Motor neuron (in vitro differentiated cells): ENCODE measurements at regions of chr3 and their contacts with region 1.

Region 1: GRCh38 chr3:168156479-168156878 is 60.8 kb upstream of the GOLIM4 start:
- ATAC-seq: no peak
- H3K4me3 ChIP-seq: no peak overlapping the region
- H3K27ac ChIP-seq: no peak overlapping the region
- H3K4me1 ChIP-seq: no peaks in the 10 kb centered on the region

Region 2: DNA sequence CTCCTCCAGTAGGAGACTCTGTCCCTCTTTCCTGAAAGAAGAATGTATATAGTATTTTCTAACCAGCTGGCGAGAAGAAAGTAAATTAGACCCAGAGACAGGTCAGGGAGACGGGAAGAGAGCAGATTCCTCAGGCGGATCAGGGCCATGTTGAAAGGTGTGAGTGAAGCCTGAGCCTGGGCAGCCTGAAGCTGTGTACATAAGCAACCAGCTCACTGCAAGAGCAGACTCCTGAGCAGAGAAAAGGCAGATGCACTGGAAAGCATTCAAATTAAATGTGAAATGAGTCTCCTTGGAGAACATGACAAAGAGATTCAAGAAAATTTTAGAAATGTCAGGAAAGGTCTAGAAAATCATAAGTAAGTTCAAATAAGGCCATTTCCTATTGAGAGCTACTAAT is 226.5 kb before region 1 on chr3:
- in situ Hi-C with region 1: loop called in 1 of 9 experiments (anchors 10 kb)
- ATAC-seq: peak in 1 of 8 experiments; percentile 67
- H3K4me3 ChIP-seq: no peak overlapping the region
- H3K27ac ChIP-seq: no peak overlapping the region
- H3K4me1 ChIP-seq: no peaks in the 10 kb centered on the region

Region 3: DNA sequence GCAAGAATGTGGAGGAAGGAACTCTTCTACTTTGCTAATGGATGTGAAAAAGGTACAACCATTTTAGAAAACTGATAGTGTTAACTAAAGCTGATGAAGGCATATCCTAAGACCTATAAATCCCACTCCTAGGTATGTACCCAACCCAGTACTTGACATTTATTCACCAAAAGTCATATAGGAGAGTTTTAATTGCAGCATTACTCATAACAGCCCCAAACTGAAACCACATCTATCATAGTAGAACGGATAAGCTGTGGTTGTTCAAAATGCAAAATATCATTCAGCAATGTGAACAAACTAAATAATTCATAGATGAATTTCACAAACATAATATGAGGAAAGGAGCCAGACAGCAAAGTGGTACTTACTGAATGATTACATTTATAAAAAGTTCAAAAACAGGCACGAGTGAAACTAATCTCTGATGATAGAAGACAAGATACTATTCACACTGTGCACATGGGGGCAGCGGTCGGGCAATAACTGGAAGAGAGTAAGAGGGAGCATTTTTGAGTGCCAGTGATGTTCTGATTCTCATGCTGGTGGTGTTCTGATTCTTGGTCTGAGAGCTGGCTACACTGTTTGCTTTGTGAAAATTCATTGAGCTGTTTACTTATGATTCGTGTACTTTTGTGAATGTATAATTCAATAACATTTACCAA is 95.0 kb before region 1 on chr3:
- in situ Hi-C with region 1: loop called in 3 of 9 experiments (anchors 10 to 25 kb)
- ATAC-seq: peak in 2 of 8 experiments; percentile 30 to 71
- H3K4me3 ChIP-seq: no peak overlapping the region
- H3K27ac ChIP-seq: no peak overlapping the region
- H3K4me1 ChIP-seq: peaks cover 0 to 9% of the 10 kb centered on the region in 2 donors